ENCODE measurements at regions of chr12 and their contacts with region 1.

Region 1: DNA sequence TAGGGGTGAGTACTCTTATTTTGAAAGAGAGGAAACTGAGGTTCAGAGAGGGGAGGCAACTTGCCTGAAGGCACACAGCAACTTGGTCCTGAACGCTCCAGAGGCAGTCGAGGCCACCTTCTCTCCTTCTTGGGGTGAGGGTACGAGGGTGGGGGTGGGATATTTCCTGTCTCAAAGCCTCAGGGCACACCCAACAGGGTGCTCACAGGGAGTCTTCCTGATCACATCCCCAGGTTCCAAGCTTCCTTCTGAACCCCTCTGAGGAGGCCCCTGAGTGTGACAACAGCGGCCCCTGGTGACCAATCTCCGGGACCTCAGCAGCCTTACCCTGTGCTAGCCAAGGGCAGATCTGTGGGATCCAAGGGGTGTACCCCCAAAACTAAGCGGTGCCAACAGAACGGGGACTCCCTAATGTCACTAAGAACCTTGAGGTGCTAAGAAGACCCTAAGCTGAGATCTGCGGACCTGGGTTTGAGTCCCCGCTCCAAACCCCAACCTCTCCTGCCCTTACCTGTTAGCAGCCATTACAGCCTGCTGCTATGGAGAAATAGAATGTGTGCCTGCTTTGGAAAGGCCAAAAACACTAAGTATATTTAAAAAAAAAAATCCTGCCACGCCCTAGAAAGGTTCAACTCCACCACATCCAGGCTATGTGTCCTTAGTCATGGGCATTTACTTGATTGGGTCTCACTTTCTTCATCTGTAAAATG is 57.9 kb downstream of the TRPV4 start:
- DNase-seq: peak; percentile 84
- ATAC-seq: peak; percentile 82

Region 2: DNA sequence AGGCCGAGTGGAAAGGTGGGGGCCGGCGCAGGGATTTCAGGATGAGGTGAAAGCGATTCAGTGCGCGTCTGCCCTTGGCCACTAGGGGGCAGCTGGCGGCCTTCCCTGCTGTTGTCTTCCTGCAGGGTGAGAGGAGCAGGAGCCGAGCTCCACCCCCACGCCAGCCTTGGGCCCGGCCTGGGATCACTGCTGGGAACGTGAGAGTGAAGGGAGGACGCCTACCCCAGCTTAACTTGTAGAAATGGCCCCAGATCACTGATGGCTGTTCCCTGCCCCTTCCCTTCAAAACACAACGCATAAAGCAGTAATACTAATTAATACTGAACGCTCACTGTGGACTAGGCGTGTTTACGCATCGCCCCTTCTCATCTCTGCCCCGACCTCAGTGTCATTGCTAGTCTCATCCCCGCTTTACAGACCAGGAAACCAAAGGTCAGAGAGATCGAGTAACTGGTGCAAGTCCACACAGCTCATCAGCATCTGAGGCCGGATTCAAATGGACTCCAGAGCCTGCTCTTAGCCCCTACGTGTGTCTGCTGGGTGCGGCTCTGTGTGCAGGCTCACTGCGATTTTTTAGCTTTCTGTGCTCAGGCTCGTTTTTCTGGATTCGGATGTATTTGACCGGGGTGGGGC is 177.4 kb before region 1 on chr12:
- intact Hi-C with region 1: loop called (anchors 1 kb)
- DNase-seq: peak; percentile 94
- ATAC-seq: peak; percentile 90

Region 3: GRCh38 chr12:109685574-109686447 is 89.5 kb before region 1 on chr12:
- intact Hi-C with region 1: no loop called
- DNase-seq: no peak
- ATAC-seq: no peak

Region 4: DNA sequence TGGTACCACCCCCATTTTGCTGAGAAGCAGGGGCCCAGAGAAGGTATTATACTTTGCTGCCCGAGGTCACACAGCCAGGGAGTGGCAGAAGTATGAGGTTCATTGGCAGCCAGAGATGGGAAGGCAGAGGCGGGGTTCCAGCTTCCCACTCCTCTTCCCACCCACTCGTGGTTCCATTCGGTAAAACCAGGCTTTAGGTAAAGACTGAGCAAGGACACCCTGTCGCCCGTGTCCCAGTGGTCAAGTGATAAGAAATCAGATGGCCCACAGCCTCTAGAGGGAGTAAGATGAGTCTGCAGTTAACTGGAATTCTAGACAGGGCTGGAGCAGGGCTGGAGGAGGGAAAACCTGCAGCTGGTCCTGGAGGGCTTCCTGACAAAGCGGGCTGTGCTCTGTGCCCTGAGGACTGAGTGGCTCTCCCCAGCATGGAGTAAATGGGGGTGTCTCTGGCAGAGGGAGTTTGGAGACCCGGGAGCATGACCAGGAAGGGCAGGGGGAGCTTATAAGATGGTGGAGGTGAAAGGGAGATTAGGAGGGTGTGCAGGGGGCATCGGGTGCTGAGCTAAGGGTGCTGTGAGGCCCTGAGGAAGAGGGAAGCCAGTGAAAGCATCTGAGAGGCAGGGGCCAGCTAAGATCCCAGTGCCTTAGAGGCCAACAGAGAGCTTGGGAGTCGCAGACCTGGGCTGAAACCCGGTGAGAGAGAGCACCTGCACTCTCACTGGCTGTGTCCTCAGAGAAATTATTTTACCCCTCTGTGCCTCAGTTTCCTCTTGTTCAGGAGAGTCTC is 55.9 kb before region 1 on chr12:
- intact Hi-C with region 1: loop called (anchors 2 kb)
- DNase-seq: peak; percentile 23
- ATAC-seq: no peak

Region 5: GRCh38 chr12:109972821-109973220 is 197.5 kb after region 1 on chr12:
- intact Hi-C with region 1: no loop called
- DNase-seq: no peak
- ATAC-seq: no peak

Measured in Right ventricle myocardium inferior (tissue), 1 donor.